Dendritic cell treated with granulocyte-macrophage colony-stimulating factor and Interleukin-4, amounts not matched to agents 40 ng/mL and 50 ng/mL, for 4 days (primary cell): ENCODE measurements at regions of chr19 and their contacts with region 1.

Region 1: GRCh38 chr19:10135551-10136334 is 16.0 kb upstream of the EIF3G start:
- H3K4me3 Mint-ChIP-seq: peak overlapping the region; percentile 77
- H3K27ac Mint-ChIP-seq: peak overlapping the region; percentile 95
- H3K4me1 Mint-ChIP-seq: peaks cover 83% of the 10 kb centered on the region
- H3K27me3 Mint-ChIP-seq: no peaks in the 10 kb centered on the region

Region 2: GRCh38 chr19:10095948-10096621 is 39.7 kb before region 1 on chr19:
- intact Hi-C with region 1: no loop called
- H3K4me3 Mint-ChIP-seq: peak overlapping the region; percentile 75
- H3K27ac Mint-ChIP-seq: peak overlapping the region; percentile 86
- H3K4me1 Mint-ChIP-seq: peaks cover 41% of the 10 kb centered on the region
- H3K27me3 Mint-ChIP-seq: peaks cover 2% of the 10 kb centered on the region

Region 3: DNA sequence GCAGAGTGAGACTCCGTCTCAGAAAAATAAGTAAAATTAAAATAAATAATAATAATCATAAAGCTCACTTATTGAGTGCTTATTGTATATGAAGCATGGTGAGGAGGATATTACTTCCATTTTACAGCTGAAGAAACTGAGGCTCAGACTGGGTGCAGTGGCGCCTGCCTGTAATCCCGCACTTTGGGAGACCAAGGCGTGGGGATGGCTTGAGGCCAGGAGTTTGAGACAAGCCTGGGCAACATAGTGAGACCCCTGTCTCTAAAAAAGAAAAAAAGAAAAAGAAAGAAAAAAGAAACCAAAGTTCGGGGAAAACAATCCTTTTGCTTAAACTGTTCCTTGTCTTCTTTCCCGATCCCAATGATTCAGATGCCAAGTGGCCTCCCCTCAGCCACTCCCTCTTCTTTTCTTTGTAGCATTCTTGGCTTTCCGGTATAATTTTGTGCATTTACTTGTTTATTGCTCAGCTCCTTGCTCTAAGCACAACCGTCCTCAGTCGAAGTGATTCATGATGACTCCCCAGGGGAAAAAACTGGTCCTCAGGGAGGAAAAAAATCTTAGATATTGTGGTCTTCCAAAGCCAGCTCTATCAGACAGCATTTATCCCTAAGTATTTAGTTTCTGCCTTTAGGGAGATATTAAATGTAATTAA is 15.1 kb before region 1 on chr19:
- intact Hi-C with region 1: loop called (anchors 1 kb)
- H3K4me3 Mint-ChIP-seq: no peak overlapping the region
- H3K27ac Mint-ChIP-seq: peak overlapping the region; percentile 93
- H3K4me1 Mint-ChIP-seq: peaks cover 62% of the 10 kb centered on the region
- H3K27me3 Mint-ChIP-seq: no peaks in the 10 kb centered on the region